Activated naive CD4-positive, alpha-beta T cell treated with anti-CD3 and anti-CD28 coated beads for 36 hours (primary cell): ENCODE measurements at regions of chr18 and their contacts with region 1.

Region 1: GRCh38 chr18:62637807-62638687 is 77.3 kb upstream of the PHLPP1 start:
- DNase-seq: peak; percentile 66
- H3K4me3 Mint-ChIP-seq: no peak overlapping the region
- H3K27ac Mint-ChIP-seq: no peak overlapping the region
- H3K4me1 Mint-ChIP-seq: no peaks in the 10 kb centered on the region
- H3K27me3 Mint-ChIP-seq: peaks cover 21% of the 10 kb centered on the region

Region 2: DNA sequence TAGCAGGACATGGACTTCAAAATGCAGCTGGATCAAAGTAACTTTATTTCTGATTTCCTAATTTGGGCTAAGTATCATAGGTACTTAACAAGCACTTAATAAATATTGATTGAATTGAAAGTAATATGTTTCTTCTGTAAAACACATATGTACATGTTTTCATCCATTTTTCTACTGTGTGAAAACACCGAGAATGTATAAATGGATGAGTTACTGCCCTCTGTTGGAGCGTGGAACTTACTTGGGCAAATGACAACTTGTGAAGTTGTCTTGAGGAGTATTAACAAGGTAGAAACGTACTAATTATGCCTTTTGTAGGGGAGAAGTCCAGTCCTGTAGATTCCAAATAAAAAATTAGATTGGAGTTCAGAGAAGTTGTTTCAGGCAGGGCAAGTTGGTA is 164.5 kb after region 1 on chr18:
- CTCF ChIA-PET with region 1: no interaction called
- intact Hi-C with region 1: no loop called
- DNase-seq: no peak
- H3K4me3 Mint-ChIP-seq: no peak overlapping the region
- H3K27ac Mint-ChIP-seq: no peak overlapping the region
- H3K4me1 Mint-ChIP-seq: no peaks in the 10 kb centered on the region
- H3K27me3 Mint-ChIP-seq: no peaks in the 10 kb centered on the region

Region 3: GRCh38 chr18:62957885-62958472 is 319.9 kb after region 1 on chr18:
- CTCF ChIA-PET with region 1: no interaction called
- intact Hi-C with region 1: loop called (anchors 1 kb)
- DNase-seq: peak; percentile 74
- H3K4me3 Mint-ChIP-seq: no peak overlapping the region
- H3K27ac Mint-ChIP-seq: no peak overlapping the region
- H3K4me1 Mint-ChIP-seq: peaks cover 12% of the 10 kb centered on the region
- H3K27me3 Mint-ChIP-seq: no peaks in the 10 kb centered on the region

Region 4: GRCh38 chr18:62982600-62983251 is 344.7 kb after region 1 on chr18:
- CTCF ChIA-PET with region 1: interaction called, 5 read pairs
- intact Hi-C with region 1: loop called (anchors 1 kb)
- DNase-seq: peak; percentile 75
- H3K4me3 Mint-ChIP-seq: no peak overlapping the region
- H3K27ac Mint-ChIP-seq: no peak overlapping the region
- H3K4me1 Mint-ChIP-seq: no peaks in the 10 kb centered on the region
- H3K27me3 Mint-ChIP-seq: no peaks in the 10 kb centered on the region